Activated T-helper 1 cell treated with anti-CD3 and anti-CD28 coated beads, Interleukin-12 subunit alpha, Interleukin-12 subunit beta, Interleukin-2, Interleukin-4 antibody, amounts not matched to agents 30 ng/mL and 10 ng/mL and 1 ng/mL, durations not matched to agents 14 hours and 24 hours and 36 hours (primary cell): ENCODE measurements at regions of chr2 and their contacts with region 1.

Region 1: GRCh38 chr2:158968396-158969161 is at the start of gene TANC1:
- DNase-seq: peak; percentile 55
- H3K4me3 Mint-ChIP-seq: peak within 1 kb of the TSS; percentile 82
- H3K27ac Mint-ChIP-seq: no peak within 1 kb of the TSS
- H3K4me1 Mint-ChIP-seq: peaks cover 15% of the 10 kb centered on the region
- H3K27me3 Mint-ChIP-seq: peaks cover 65% of the 10 kb centered on the region
- total RNA-seq, gene TANC1: 0.37 and 0.47 TPM in 2 replicates

Region 2: DNA sequence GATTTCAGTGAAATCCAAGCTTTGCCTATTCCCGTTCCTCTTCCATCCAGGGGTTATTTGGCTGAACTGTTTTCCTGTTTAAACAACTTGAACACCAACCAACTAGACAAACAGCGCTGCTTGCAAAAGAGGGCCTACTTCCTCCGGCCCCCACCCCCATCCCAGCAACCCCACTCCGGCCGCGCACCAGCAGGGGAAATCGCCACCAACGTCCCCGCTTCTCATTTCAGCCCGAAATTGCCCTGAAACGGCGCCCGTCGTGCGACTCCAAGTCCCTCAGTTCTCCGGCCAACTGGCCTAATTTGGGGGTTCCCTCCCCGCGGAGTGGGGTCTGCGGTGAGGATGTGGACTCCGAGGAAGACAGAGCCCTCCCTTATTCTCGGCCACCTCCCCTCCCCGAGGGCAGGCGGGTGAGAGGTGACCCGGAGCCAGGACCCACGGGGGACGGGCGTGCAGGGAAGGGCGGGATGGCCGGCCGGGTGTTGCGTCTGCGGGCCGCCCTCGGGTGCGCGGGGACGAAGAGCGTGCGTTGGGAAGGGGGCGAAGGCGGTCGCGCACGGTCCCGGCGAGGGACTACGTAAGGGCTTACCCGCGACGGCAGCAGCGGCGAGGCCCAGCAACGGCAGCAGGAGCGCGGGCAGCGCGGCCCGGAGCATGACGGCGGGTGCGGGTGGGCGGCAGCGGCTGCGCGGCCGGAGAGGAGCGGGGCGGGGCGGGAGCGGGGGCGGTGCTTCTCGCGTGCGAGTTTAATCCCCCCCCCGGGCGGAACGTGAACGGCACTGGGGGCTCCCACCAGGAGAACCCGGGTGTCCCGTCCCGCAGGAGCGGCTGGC is 829.2 kb after region 1 on chr2 and contains the start of gene CD302:
- intact Hi-C with region 1: loop called (anchors 10 kb)
- DNase-seq: no peak
- H3K4me3 Mint-ChIP-seq: peak within 1 kb of the TSS; percentile 61
- H3K27ac Mint-ChIP-seq: no peak within 1 kb of the TSS
- H3K4me1 Mint-ChIP-seq: peaks cover 14% of the 10 kb centered on the region
- H3K27me3 Mint-ChIP-seq: peaks cover 55% of the 10 kb centered on the region
- total RNA-seq, gene CD302: 0.44 and 0.47 TPM in 2 replicates